ENCODE measurements at regions of chr5 and their contacts with region 1.

Region 1: DNA sequence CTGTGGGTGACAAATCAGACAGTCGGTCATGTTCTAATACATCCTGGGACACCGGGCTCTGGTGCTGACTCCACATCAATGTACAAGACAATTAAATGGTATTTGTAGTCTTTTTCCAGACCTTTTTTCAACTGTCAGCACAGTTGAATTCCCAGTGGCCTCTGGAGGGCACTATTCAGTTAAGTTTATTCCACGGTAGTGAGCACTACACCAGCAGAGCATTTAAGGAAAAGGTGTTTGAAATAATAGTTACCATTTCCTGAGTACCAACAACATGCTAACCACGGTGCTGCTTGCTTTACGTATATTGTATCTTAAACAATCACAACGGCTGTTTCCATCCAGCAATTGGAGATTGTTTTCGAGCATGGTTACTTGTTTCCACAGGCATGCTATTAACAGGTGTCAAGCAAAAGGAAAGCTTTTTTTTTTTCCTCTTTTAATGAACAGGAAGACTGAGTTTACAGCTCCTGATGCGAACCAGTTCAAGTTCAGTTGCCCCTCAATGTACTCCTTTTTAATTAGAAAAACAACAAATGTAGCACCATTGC is 186.7 kb downstream of the PDZD2 start:
- DNase-seq: peak in 2 of 4 donors; percentile 59 to 66
- ATAC-seq: peak; percentile 97
- H3K4me3 ChIP-seq: no peak overlapping the region
- H3K27ac ChIP-seq: no peak overlapping the region
- H3K4me1 ChIP-seq: peaks cover 0 to 4% of the 10 kb centered on the region in 2 donors
- H3K27me3 ChIP-seq: no peaks in the 10 kb centered on the region
- CTCF ChIP-seq: peak; percentile 66 to 67

Region 2: GRCh38 chr5:32076699-32077695 is 251.4 kb after region 1 on chr5:
- intact Hi-C with region 1: loop called (anchors 10 kb)
- DNase-seq: peak in 1 of 4 donors; percentile 70
- ATAC-seq: peak; percentile 76
- H3K4me3 ChIP-seq: no peak overlapping the region
- H3K27ac ChIP-seq: no peak overlapping the region
- H3K4me1 ChIP-seq: no peaks in the 10 kb centered on the region
- H3K27me3 ChIP-seq: no peaks in the 10 kb centered on the region
- CTCF ChIP-seq: peak; percentile 53 to 77

Region 3: DNA sequence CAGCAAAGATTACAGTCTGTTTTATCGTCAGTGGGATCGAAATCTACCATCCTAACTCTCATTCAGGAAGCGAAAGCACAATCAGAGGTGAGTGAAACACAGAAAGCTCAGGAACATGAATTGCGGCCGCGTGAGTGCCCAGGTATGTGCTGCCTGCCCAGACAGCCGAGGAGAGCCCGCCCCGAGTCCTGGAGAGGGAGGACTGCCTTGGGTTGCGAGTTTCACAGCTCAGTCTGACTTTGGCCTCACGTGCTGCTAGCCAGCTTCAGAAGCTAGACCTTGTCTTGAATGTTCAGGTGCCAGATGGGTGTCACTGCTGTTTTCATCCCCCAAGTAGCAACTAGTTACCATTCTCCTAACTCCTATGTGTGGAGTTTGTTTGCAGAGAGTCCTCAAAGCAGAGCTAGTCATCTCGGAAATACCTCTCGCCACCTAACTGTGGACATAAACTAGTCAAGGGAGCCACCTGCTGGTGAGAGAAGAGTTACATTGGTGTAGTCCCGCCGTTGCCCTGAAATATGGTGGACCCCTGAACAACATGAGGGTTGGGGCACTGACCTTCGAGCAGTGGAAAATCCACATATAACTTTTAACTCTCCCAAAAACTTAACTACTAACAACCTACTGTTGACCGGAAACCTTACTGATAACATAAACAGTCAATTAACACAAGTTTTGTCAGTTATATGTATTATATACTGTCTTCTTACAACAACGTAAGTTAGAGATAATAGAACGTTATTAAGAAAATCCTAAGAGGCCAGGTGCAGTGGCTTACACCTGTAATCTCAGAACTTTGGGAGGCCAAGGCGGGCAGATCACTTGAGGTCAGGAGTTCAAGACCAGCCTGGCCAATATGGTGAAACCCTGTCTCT is 267.6 kb after region 1 on chr5:
- intact Hi-C with region 1: loop called in 1 of 2 experiments (anchors 5 kb)
- DNase-seq: peak in 2 of 4 donors; percentile 61 to 78
- ATAC-seq: peak; percentile 85
- H3K4me3 ChIP-seq: no peak overlapping the region
- H3K27ac ChIP-seq: no peak overlapping the region
- H3K4me1 ChIP-seq: peaks cover 3 to 5% of the 10 kb centered on the region in 2 donors
- H3K27me3 ChIP-seq: no peaks in the 10 kb centered on the region
- CTCF ChIP-seq: peak; percentile 53 to 56